Prostate gland (tissue), 2 donors: ENCODE measurements at regions of chr1 and their contacts with region 1.

Region 1: GRCh38 chr1:26111530-26112406 is at the start of gene PDIK1L:
- DNase-seq: peak; percentile 92
- H3K4me3 ChIP-seq: peak within 1 kb of the TSS; percentile 87 to 88
- H3K27ac ChIP-seq: peak within 1 kb of the TSS; percentile 87 to 92
- H3K4me1 ChIP-seq: no peaks in the 10 kb centered on the region
- H3K27me3 ChIP-seq: no peaks in the 10 kb centered on the region
- CTCF ChIP-seq: peak in 2 of 4 experiments; percentile 16 to 17
- POLR2A ChIP-seq: peak; percentile 80
- total RNA-seq, gene PDIK1L: 10.5 TPM

Region 2: GRCh38 chr1:26218906-26219494 is 107.2 kb after region 1 on chr1:
- intact Hi-C with region 1: no loop called
- DNase-seq: no peak
- H3K4me3 ChIP-seq: no peak overlapping the region
- H3K27ac ChIP-seq: no peak overlapping the region
- H3K4me1 ChIP-seq: no peaks in the 10 kb centered on the region
- H3K27me3 ChIP-seq: no peaks in the 10 kb centered on the region
- CTCF ChIP-seq: no peak
- POLR2A ChIP-seq: no peak

Region 3: GRCh38 chr1:26233903-26234643 is 122.3 kb after region 1 on chr1 and contains the start of gene CEP85:
- intact Hi-C with region 1: no loop called
- DNase-seq: peak; percentile 98
- H3K4me3 ChIP-seq: peak within 1 kb of the TSS; percentile 57 to 70
- H3K27ac ChIP-seq: peak within 1 kb of the TSS; percentile 84 to 88
- H3K4me1 ChIP-seq: no peaks in the 10 kb centered on the region
- H3K27me3 ChIP-seq: no peaks in the 10 kb centered on the region
- CTCF ChIP-seq: peak; percentile 63 to 96 (median 88)
- POLR2A ChIP-seq: peak; percentile 84
- total RNA-seq, gene CEP85: 3.4 to 21.0 TPM

Region 4: GRCh38 chr1:26279456-26280332 is 167.9 kb after region 1 on chr1 and contains the start of gene SH3BGRL3:
- intact Hi-C with region 1: loop called (anchors 5 kb)
- DNase-seq: peak; percentile 87
- H3K4me3 ChIP-seq: peak within 1 kb of the TSS; percentile 77 to 91
- H3K27ac ChIP-seq: peak within 1 kb of the TSS; percentile 87 to 92
- H3K4me1 ChIP-seq: peaks cover 23% of the 10 kb centered on the region
- H3K27me3 ChIP-seq: no peaks in the 10 kb centered on the region
- CTCF ChIP-seq: peak in 3 of 4 experiments; percentile 11 to 45 (median 36)
- POLR2A ChIP-seq: peak; percentile 99
- total RNA-seq, gene SH3BGRL3: 37.4 to 55.3 TPM